ENCODE measurements at regions of chr16 and their contacts with region 1.

Region 1: GRCh38 chr16:87778830-87779579 is 13.2 kb upstream of the KLHDC4 start:
- DNase-seq: peak; percentile 98
- ATAC-seq: peak; percentile 79
- H3K4me3 Mint-ChIP-seq: peak overlapping the region; percentile 89
- H3K27ac Mint-ChIP-seq: peak overlapping the region; percentile 99
- H3K4me1 Mint-ChIP-seq: peaks cover 42% of the 10 kb centered on the region
- H3K27me3 Mint-ChIP-seq: no peaks in the 10 kb centered on the region
- CTCF ChIP-seq: peak; percentile 92

Region 2: DNA sequence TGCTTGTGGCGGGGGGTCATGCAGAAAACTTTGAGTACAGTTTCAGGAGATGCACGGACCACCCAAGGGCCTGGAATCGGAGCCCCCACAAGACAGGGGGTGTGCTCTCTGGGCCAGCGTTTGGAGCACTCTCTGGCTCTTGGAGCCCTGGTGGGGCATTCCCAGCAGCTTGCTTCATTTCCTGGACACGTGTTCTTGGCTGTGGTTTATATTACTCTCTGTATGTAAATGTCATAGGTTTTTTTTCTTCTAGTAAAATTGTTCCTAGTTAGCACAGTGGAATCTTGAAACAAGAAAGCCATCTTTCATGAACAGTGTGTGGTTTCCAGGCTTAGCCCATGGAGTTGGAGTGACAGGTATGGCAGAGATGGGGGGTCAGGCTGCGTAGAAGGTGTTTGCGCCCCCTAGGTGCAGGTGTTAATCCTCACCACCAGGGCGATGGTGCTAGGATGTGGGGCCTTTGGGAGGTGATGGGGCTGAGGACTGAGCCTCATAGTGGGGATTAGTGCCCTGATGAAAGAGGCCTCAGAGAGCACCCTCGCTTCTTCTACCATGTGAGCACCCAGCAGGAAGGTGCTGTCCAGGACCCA is 96.9 kb before region 1 on chr16:
- CTCF ChIA-PET with region 1: no interaction called
- POLR2A ChIA-PET with region 1: no interaction called
- intact Hi-C with region 1: no loop called
- DNase-seq: peak; percentile 63
- ATAC-seq: peak; percentile 90
- H3K4me3 Mint-ChIP-seq: no peak overlapping the region
- H3K27ac Mint-ChIP-seq: peak overlapping the region; percentile 18
- H3K4me1 Mint-ChIP-seq: peaks cover 12% of the 10 kb centered on the region
- H3K27me3 Mint-ChIP-seq: peaks cover 3% of the 10 kb centered on the region
- CTCF ChIP-seq: no peak

Region 3: GRCh38 chr16:87765776-87766484 is 13.1 kb before region 1 on chr16 and contains the start of gene KLHDC4:
- CTCF ChIA-PET with region 1: interaction called, 41 read pairs
- POLR2A ChIA-PET with region 1: interaction called, 19 read pairs
- intact Hi-C with region 1: no loop called
- DNase-seq: peak; percentile 94
- ATAC-seq: peak; percentile 72
- H3K4me3 Mint-ChIP-seq: peak within 1 kb of the TSS; percentile 86
- H3K27ac Mint-ChIP-seq: peak within 1 kb of the TSS; percentile 94
- H3K4me1 Mint-ChIP-seq: peaks cover 31% of the 10 kb centered on the region
- H3K27me3 Mint-ChIP-seq: no peaks in the 10 kb centered on the region
- CTCF ChIP-seq: no peak
- total RNA-seq, gene KLHDC4: 80.8 to 81.7 TPM

Region 4: DNA sequence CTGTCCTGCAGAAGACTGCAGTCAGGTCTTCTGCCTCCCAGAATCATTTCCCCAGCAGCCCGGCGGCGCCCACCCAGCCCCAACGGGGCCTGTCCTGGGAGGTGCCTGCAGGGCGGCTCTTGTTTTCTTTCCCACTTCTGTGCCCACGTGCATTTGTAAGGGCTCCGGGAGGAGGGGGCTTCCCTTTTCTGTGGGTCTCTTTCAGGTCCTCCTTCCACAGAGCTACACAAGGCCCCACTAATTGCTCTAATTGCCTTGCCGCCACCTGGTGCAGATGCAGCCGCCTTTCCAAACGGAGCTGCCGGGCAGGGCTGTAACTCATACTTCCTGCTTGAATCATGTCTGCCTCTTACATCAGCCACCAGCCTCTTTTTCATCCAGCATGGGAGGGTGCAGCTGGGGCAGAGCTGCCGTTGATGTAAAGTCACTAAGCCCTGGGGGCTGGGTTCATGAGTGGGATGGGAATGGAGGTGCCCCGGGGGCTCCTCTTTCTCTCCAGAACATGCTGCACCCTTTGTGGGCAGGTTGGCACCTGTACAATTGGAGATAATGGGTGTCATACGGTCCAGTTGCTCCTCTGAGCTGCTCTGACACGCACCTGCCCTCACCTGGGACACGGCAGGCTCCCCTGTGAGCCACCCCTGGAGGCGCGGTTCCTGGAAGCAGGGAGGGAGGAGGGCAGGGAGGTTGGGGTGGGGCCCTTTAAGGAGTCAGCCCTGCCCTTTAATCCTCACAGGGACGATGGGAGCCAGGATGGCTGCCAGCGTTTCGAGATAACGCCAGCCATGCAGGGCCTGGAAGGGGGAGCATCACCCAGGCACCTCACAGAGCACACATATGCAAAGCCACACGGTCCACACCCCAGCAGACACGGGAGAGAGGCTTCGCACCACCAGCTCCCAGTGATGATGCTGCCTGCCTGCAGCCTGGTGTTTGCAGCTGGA is 27.9 kb after region 1 on chr16:
- CTCF ChIA-PET with region 1: interaction called, 58 read pairs
- POLR2A ChIA-PET with region 1: interaction called, 40 read pairs
- intact Hi-C with region 1: no loop called
- DNase-seq: peak; percentile 81
- ATAC-seq: peak; percentile 81
- H3K4me3 Mint-ChIP-seq: peak overlapping the region; percentile 87
- H3K27ac Mint-ChIP-seq: peak overlapping the region; percentile 95
- H3K4me1 Mint-ChIP-seq: peaks cover 32% of the 10 kb centered on the region
- H3K27me3 Mint-ChIP-seq: no peaks in the 10 kb centered on the region
- CTCF ChIP-seq: no peak

Region 5: GRCh38 chr16:87834623-87835407 is 55.8 kb after region 1 on chr16:
- CTCF ChIA-PET with region 1: interaction called, 10 read pairs
- POLR2A ChIA-PET with region 1: interaction called, 19 read pairs
- intact Hi-C with region 1: no loop called
- DNase-seq: no peak
- ATAC-seq: no peak
- H3K4me3 Mint-ChIP-seq: no peak overlapping the region
- H3K27ac Mint-ChIP-seq: no peak overlapping the region
- H3K4me1 Mint-ChIP-seq: no peaks in the 10 kb centered on the region
- H3K27me3 Mint-ChIP-seq: no peaks in the 10 kb centered on the region
- CTCF ChIP-seq: no peak

Region 6: GRCh38 chr16:87853411-87854052 is 74.5 kb after region 1 on chr16:
- CTCF ChIA-PET with region 1: interaction called, 75 read pairs
- POLR2A ChIA-PET with region 1: interaction called, 28 read pairs
- intact Hi-C with region 1: no loop called
- DNase-seq: peak; percentile 97
- ATAC-seq: peak; percentile 80
- H3K4me3 Mint-ChIP-seq: peak overlapping the region; percentile 68
- H3K27ac Mint-ChIP-seq: peak overlapping the region; percentile 93
- H3K4me1 Mint-ChIP-seq: peaks cover 62% of the 10 kb centered on the region
- H3K27me3 Mint-ChIP-seq: no peaks in the 10 kb centered on the region
- CTCF ChIP-seq: no peak

Region 7: GRCh38 chr16:87877938-87878507 is 99.0 kb after region 1 on chr16:
- CTCF ChIA-PET with region 1: interaction called, 305 read pairs
- POLR2A ChIA-PET with region 1: interaction called, 106 read pairs
- intact Hi-C with region 1: no loop called
- DNase-seq: peak; percentile 71
- ATAC-seq: peak; percentile 17
- H3K4me3 Mint-ChIP-seq: no peak overlapping the region
- H3K27ac Mint-ChIP-seq: no peak overlapping the region
- H3K4me1 Mint-ChIP-seq: peaks cover 50% of the 10 kb centered on the region
- H3K27me3 Mint-ChIP-seq: peaks cover 4% of the 10 kb centered on the region
- CTCF ChIP-seq: peak; percentile 55

Region 8: DNA sequence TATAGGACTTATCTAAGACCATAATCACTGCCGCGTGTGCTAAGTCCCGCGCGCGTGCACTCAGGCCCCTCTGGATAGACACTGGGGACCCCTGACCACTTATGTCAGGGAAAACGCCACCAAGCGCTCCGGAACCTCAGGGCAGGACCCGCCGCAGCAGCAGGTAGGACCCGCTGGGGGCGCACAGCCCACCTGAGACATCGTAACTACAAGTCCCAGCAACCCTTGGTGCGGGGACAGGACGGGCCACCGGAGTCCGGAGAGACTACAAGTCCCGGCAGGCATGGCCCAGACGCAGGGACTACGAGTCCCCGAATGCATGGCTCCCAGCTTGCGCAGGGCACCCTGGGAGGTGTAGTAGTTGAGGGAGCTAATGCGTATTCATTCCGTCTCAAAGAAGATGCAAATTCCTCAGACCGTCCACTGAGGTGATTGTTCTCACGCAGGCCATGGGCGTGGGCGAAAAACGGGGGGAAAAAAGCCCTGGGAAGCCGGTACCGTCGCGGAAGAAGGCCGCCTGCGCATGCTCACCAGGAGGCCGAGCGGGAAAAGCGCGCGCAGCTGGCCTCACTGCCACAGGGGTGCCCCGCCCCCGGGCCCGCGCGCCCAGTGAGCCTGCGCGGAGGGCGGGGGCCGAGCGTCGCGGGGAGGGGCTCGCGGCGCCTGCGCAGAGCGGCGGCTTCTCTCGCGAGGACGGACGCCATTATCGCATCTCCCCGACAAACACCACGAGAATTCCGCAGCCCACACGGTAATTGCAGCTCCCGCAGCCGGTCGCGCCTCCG is 172.0 kb after region 1 on chr16 and contains the start of gene BANP:
- CTCF ChIA-PET with region 1: interaction called, 12 read pairs
- POLR2A ChIA-PET with region 1: interaction called, 6 read pairs
- intact Hi-C with region 1: no loop called
- DNase-seq: peak; percentile 99
- ATAC-seq: peak; percentile 95
- H3K4me3 Mint-ChIP-seq: peak within 1 kb of the TSS; percentile 88
- H3K27ac Mint-ChIP-seq: peak within 1 kb of the TSS; percentile 99
- H3K4me1 Mint-ChIP-seq: peaks cover 51% of the 10 kb centered on the region
- H3K27me3 Mint-ChIP-seq: no peaks in the 10 kb centered on the region
- CTCF ChIP-seq: peak; percentile 73
- total RNA-seq, gene BANP: 32.1 to 36.1 TPM

Measured in activated CD8-positive, alpha-beta T cell treated with anti-CD3 and anti-CD28 coated beads for 36 hours (primary cell).